HEK293 (cell line): ENCODE measurements at regions of chr1 and their contacts with region 1.

Region 1: GRCh38 chr1:233010146-233010545 is 59.7 kb downstream of the NTPCR start:
- H3K4me3 ChIP-seq: no peak overlapping the region
- H3K27ac ChIP-seq: no peak overlapping the region
- H3K4me1 ChIP-seq: no peaks in the 10 kb centered on the region
- CTCF ChIP-seq: no peak

Region 2: DNA sequence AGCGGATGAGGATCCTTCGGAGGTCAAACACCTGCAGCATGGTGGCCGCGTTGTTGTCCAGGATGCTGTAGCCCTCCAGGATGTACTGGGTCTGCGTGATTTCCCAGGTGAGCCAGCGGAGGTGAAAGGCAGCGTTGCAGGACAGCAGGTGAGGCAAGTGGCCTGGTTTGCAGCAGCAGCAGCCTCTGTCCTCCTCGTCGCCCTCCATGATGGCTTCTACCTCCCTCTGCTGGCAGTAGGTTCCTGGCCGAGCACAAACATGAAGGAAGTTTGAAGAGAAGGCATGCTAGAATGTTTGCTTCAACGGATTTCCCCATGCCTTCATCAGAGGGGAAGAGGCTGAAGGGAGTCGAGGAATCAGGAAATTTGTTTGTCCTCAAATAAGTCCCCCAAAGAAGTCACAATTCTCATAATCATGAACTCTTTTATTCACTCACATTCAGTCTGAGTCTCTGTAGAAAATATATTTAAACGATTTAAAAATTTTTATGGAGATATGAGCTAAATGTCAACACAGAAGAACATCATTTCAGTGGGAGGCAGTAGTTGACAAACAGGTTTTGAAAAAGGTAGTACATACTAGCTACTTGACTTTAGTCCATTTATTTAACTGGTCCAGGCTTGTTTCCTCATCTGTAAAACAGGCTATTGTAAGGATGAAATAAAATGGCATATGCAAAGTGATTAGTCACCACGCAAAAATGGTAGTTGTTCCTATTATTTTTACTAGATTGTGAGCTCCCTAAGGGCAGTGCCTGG is 15.2 kb after region 1 on chr1:
- CTCF ChIA-PET with region 1: interaction called, 10 read pairs
- POLR2A ChIA-PET with region 1: interaction called, 6 read pairs
- H3K4me3 ChIP-seq: no peak overlapping the region
- H3K27ac ChIP-seq: no peak overlapping the region
- H3K4me1 ChIP-seq: 0 out of 2 replicates have a peak, but pooled peaks cover under 1% of the 10 kb centered on the region
- CTCF ChIP-seq: peak; percentile 83